Heart left ventricle (tissue), 16 donors: ENCODE measurements at regions of chr12 and their contacts with region 1.

Region 1: DNA sequence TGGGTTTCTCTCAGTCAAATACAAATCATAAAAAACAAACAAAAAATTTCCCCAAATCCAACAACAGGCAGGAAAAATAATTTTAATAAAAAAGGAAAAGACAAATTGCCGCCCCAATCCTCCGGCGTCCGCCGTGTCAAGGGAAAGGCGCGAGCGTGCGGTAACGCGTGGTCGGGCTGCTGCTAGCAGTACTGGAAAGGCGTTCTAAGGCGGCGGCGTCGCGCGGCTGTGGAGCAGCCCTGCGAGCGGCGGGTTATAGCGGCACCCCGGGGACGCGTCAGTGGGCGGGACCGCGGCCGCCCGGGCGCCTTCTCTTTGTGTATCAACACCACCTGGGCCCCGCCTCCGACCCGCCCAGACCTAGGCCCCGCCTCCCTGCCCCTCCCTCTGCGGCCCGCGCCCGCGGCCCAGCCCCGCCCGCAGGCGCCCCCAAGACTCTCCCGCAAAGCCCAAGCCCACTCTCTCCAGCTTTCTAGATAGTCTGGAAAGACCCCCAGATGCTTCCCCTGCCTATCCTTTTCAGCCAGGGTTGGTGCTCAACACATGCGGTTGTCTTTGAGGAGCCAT is at the start of gene SLC38A2:
- DNase-seq: peak; percentile 98 to 99 (median 99)
- ATAC-seq: peak; percentile 95 to 97 (median 96)
- H3K4me3 ChIP-seq: peak within 1 kb of the TSS; percentile 73 to 95 (median 88)
- H3K27ac ChIP-seq: peak within 1 kb of the TSS; percentile 93 to 100 (median 97)
- H3K4me1 ChIP-seq: peaks cover 6 to 46% (median 35%) of the 10 kb centered on the region in 12 donors
- H3K27me3 ChIP-seq: no peaks in the 10 kb centered on the region
- CTCF ChIP-seq: no peak
- POLR2A ChIP-seq: peak; percentile 97 to 100
- total RNA-seq, gene SLC38A2: 82.1 to 373 (median 161) TPM

Region 2: GRCh38 chr12:45990468-45991283 is 382.0 kb before region 1 on chr12 and contains the start of gene SCAF11:
- intact Hi-C with region 1: loop called in 2 of 10 experiments (anchors 5 to 10 kb)
- DNase-seq: peak; percentile 100
- ATAC-seq: peak; percentile 90 to 96 (median 94)
- H3K4me3 ChIP-seq: peak within 1 kb of the TSS; percentile 73 to 98 (median 90)
- H3K27ac ChIP-seq: peak within 1 kb of the TSS; percentile 96 to 100 (median 99)
- H3K4me1 ChIP-seq: peaks cover 0 to 48% (median 35%) of the 10 kb centered on the region in 12 donors
- H3K27me3 ChIP-seq: no peaks in the 10 kb centered on the region
- CTCF ChIP-seq: peak; percentile 91 to 99 (median 94)
- POLR2A ChIP-seq: peak; percentile 66 to 75
- total RNA-seq, gene SCAF11: 71.3 to 148 (median 98.7) TPM

Region 3: GRCh38 chr12:46209914-46210872 is 162.4 kb before region 1 on chr12:
- intact Hi-C with region 1: loop called in 2 of 10 experiments (anchors 5 to 10 kb)
- DNase-seq: peak; percentile 24 to 75 (median 65)
- ATAC-seq: peak; percentile 83 to 90 (median 88)
- H3K4me3 ChIP-seq: no peak overlapping the region
- H3K27ac ChIP-seq: peak overlapping the region; percentile 31 to 77 (median 66)
- H3K4me1 ChIP-seq: peaks cover 0 to 74% (median 21%) of the 10 kb centered on the region in 12 donors
- H3K27me3 ChIP-seq: no peaks in the 10 kb centered on the region
- CTCF ChIP-seq: no peak
- POLR2A ChIP-seq: no peak

Region 4: GRCh38 chr12:46268590-46269558 is 103.8 kb before region 1 on chr12 and contains the start of gene SLC38A1:
- intact Hi-C with region 1: loop called in 1 of 10 experiments (anchors 5 kb)
- DNase-seq: peak; percentile 79 to 92 (median 89)
- ATAC-seq: peak; percentile 75 to 91 (median 86)
- H3K4me3 ChIP-seq: peak within 1 kb of the TSS; percentile 44 to 75 (median 64)
- H3K27ac ChIP-seq: peak within 1 kb of the TSS; percentile 47 to 91 (median 78)
- H3K4me1 ChIP-seq: peaks cover 0 to 59% (median 20%) of the 10 kb centered on the region in 12 donors
- H3K27me3 ChIP-seq: peaks cover 0 to 37% (median 0%) of the 10 kb centered on the region in 9 donors
- CTCF ChIP-seq: peak in 1 of 12 donors; percentile 7
- POLR2A ChIP-seq: peak; percentile 43 to 83
- total RNA-seq, gene SLC38A1: 98.4 to 248 (median 157) TPM

Region 5: DNA sequence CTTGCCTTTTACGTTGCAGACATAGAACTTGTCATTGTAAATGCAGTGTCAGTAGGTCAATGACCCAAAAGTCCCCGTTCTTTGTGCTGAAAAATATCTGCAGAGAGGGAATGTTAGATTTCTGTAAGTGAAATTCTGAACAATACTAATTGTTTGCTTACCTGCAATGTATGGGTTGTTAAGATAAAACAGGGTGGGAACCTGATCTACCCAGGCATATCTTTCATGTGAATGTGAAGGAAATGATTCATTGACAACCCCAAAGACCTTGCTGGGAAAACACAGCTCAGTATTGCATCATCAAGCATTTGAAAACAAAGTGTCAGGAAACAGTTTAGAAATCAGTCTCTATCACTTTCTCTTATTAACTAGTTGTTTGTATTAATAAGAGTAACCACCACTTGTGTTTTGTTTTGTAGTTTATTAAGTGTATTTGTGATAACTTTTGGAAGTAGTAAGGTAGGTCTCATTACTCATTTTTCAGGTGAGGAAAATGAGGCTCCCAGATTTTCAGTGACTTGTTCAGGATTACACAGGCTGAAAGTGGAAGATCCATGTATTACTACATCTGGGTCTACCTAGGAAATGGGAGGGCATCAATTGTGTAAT is 57.8 kb after region 1 on chr12:
- intact Hi-C with region 1: loop called in 1 of 10 experiments (anchors 5 kb)
- DNase-seq: no peak
- ATAC-seq: peak in 3 of 4 donors; percentile 75 to 81 (median 80)
- H3K4me3 ChIP-seq: no peak overlapping the region
- H3K27ac ChIP-seq: peak overlapping the region in 11 of 12 donors; percentile 10 to 81 (median 46)
- H3K4me1 ChIP-seq: peaks cover 0 to 31% (median 23%) of the 10 kb centered on the region in 12 donors
- H3K27me3 ChIP-seq: no peaks in the 10 kb centered on the region
- CTCF ChIP-seq: no peak
- POLR2A ChIP-seq: no peak

Region 6: GRCh38 chr12:46473634-46474329 is 101.2 kb after region 1 on chr12:
- intact Hi-C with region 1: loop called in 3 of 10 experiments (anchors 2 to 5 kb)
- DNase-seq: peak; percentile 70 to 79 (median 78)
- ATAC-seq: peak; percentile 70 to 92 (median 92)
- H3K4me3 ChIP-seq: peak overlapping the region in 2 of 12 donors; percentile 6 to 12
- H3K27ac ChIP-seq: peak overlapping the region; percentile 56 to 92 (median 83)
- H3K4me1 ChIP-seq: peaks cover 0 to 48% (median 28%) of the 10 kb centered on the region in 12 donors
- H3K27me3 ChIP-seq: no peaks in the 10 kb centered on the region
- CTCF ChIP-seq: no peak
- POLR2A ChIP-seq: no peak

Region 7: DNA sequence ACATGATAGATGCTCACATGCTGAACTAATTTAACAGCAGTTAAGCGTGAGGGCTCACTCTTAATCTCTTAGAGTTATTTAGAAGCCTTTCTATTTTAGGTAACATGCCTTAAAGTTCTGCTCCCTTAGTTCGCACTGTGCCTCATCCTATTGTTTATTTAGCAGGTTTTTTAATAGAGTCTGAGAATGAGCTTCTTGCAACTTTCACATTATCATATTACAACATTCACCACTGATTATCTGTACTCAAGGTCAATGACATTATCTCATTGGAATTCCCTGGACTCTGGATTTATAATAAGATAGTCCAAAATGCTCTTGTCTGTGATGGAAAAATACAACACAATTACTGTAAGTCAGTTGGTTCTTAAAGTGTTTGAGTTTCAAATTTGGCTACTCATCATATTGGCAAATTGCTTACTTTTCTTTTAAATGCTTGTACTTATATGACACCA is 183.5 kb after region 1 on chr12:
- intact Hi-C with region 1: loop called in 1 of 10 experiments (anchors 5 kb)
- DNase-seq: no peak
- ATAC-seq: peak; percentile 87 to 95 (median 93)
- H3K4me3 ChIP-seq: no peak overlapping the region
- H3K27ac ChIP-seq: peak overlapping the region in 11 of 12 donors; percentile 23 to 81 (median 62)
- H3K4me1 ChIP-seq: peaks cover 0 to 47% (median 21%) of the 10 kb centered on the region in 12 donors
- H3K27me3 ChIP-seq: no peaks in the 10 kb centered on the region
- CTCF ChIP-seq: no peak
- POLR2A ChIP-seq: no peak

Region 8: DNA sequence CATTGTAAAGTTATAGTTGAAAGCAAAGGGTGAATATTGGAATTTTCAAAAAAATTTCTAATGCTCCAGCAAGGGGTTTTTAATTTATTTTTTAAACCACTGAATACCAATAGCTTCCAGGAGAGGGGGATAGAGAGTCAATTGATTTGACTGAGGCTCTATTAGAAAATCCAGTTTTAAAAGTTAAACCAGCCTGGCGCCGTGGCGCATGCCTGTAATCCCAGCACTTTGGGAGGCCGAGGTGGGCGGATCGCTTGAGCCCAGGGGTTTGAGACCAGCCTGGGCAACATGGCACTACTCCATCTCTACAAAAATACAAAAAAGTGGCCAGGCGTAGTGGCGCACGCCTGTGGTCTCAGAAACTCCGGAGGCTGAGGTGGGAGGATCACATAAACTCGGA is 303.1 kb after region 1 on chr12:
- intact Hi-C with region 1: no loop called
- DNase-seq: peak in 1 of 5 donors; percentile 23
- ATAC-seq: no peak
- H3K4me3 ChIP-seq: peak overlapping the region in 1 of 12 donors; percentile 23
- H3K27ac ChIP-seq: no peak overlapping the region
- H3K4me1 ChIP-seq: peaks cover 0 to 8% (median 0%) of the 10 kb centered on the region in 12 donors
- H3K27me3 ChIP-seq: no peaks in the 10 kb centered on the region
- CTCF ChIP-seq: peak; percentile 58 to 78 (median 68)
- POLR2A ChIP-seq: no peak